Activated CD4-positive, alpha-beta memory T cell treated with anti-CD3 and anti-CD28 coated beads, Interleukin-2, amount 10 ng/mL, durations not matched to agents 7 days and 5 days (primary cell): ENCODE measurements at regions of chr10 and their contacts with region 1.

Region 1: DNA sequence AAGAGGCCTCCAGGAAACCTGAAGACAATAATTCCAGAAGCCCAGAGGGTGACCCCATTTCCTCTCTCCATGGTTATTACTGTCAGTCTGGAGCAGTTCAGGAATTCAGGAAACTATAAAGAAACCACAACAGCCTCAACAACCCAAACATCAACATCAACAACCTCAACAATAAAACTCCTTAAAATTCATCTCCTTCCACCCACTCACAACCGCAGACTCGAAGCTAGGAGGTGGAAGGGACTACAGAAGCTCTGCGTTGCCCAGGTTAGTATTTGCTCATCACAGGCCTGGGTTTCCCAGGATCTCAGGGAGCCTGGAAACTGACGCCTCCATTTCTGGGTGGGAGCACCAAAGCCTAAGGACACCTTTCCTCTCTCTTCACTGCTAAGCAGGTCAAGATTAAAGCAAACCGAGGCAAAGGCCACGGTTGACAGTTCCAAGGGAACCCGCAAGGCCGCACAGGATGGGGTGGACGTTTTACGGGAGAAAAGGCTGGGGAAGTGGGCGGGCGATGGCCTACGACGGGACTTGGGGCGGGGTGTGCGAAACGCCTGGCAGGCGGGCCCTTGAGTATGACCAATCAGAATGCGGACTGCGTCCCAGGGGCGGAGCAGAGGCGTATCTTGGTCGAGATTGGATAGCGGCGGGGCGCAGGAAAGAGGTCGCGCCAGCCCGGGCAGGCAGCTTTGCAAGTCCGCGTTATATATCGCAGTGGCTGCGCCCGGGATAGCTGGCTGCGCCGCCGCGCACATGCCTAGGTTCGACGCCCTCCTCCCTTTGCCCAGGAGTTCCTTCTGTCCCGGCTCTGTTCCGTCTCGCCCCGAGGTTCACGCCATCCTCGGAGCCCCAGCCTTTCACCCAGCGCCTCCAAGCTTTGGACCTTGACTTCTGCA is at the start of gene ELOVL3:
- DNase-seq: peak; percentile 90
- H3K4me3 Mint-ChIP-seq: peak within 1 kb of the TSS; percentile 63
- H3K27ac Mint-ChIP-seq: peak within 1 kb of the TSS; percentile 44
- H3K4me1 Mint-ChIP-seq: peaks cover 26% of the 10 kb centered on the region
- H3K27me3 Mint-ChIP-seq: peaks cover 67% of the 10 kb centered on the region
- total RNA-seq, gene ELOVL3: not detected

Region 2: DNA sequence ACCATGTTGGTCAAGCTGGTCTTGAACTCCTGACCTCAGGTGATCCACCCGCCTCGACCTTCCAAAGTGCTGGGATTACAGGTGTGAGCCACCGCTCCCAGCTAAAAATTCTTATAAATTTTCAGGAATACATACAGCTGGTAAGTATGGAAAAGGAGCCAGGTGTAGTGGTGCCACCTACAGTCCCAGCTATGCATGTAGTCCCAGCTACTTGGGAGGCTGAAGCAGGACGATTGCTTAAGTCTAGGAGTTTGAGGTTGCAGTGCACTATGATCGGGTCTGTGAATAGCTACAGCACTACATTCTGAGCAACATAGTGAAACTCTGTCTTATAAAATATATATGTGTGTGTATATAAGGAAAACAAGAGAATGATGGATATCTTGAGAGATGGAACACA is 124.7 kb before region 1 on chr10:
- CTCF ChIA-PET with region 1: no interaction called
- POLR2A ChIA-PET with region 1: no interaction called
- DNase-seq: no peak
- H3K4me3 Mint-ChIP-seq: no peak overlapping the region
- H3K27ac Mint-ChIP-seq: no peak overlapping the region
- H3K4me1 Mint-ChIP-seq: peaks cover 18% of the 10 kb centered on the region
- H3K27me3 Mint-ChIP-seq: no peaks in the 10 kb centered on the region

Region 3: DNA sequence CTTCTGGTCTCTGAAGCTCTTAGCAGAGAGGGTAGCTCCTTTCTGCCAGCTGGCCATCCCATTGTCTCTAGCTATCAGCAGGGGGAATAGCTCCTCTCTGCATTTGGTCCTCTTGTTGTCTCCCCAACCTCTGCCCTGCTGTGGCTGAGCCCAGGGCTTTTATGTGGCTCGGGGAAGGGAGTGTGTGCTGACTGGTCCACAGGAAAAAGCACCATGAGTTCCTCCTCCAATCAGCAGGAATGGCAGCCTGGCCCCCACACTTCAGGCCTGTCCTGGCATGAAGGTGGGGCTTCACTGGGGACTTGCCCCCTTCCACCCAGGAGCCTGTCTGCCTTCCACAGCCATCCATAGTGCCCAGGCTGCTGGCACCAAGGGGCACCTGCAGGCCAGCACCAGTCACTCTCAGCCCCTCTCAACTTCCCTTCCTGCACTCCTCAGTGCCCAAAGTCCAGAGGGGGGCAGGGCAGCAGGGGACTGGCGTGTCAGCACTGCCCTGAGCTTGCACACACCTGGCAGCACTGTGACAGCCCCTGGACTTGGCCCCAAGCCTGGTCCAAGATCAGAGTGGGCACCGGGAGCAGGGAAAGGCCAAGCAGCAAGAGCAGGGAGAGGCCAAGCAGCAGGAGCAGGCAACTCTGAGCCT is 37.5 kb before region 1 on chr10:
- CTCF ChIA-PET with region 1: interaction called, 26 read pairs
- POLR2A ChIA-PET with region 1: no interaction called
- DNase-seq: no peak
- H3K4me3 Mint-ChIP-seq: no peak overlapping the region
- H3K27ac Mint-ChIP-seq: peak overlapping the region; percentile 78
- H3K4me1 Mint-ChIP-seq: peaks cover 17% of the 10 kb centered on the region
- H3K27me3 Mint-ChIP-seq: peaks cover 5% of the 10 kb centered on the region

Region 4: DNA sequence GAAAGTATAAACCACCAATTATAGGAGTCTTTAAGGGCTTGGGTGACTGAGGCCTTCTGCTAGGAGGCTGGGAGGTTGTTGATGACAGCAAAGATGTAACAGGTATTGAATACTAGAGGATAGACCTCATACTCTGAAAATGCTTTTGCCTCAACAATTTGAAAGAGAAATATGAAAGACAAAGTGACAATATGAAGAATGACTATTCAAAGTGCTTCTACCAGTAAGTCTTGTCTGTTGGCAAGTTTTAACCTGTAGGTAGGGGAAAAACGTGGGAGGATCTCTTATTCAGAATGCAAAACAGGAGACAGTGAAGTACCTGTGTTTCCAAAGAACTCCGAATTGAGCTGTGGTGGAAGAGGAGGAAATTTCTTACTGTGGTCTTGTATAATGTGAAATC is 57.6 kb after region 1 on chr10:
- CTCF ChIA-PET with region 1: interaction called, 14 read pairs
- POLR2A ChIA-PET with region 1: no interaction called
- DNase-seq: no peak
- H3K4me3 Mint-ChIP-seq: peak overlapping the region; percentile 25
- H3K27ac Mint-ChIP-seq: peak overlapping the region; percentile 80
- H3K4me1 Mint-ChIP-seq: peaks cover 77% of the 10 kb centered on the region
- H3K27me3 Mint-ChIP-seq: no peaks in the 10 kb centered on the region

Region 5: GRCh38 chr10:102342958-102343357 is 117.1 kb after region 1 on chr10:
- CTCF ChIA-PET with region 1: interaction called, 593 read pairs
- POLR2A ChIA-PET with region 1: interaction called, 4 read pairs
- DNase-seq: no peak
- H3K4me3 Mint-ChIP-seq: no peak overlapping the region
- H3K27ac Mint-ChIP-seq: no peak overlapping the region
- H3K4me1 Mint-ChIP-seq: peaks cover 6% of the 10 kb centered on the region
- H3K27me3 Mint-ChIP-seq: no peaks in the 10 kb centered on the region

Region 6: GRCh38 chr10:102368072-102368471 is 142.2 kb after region 1 on chr10:
- CTCF ChIA-PET with region 1: interaction called, 12 read pairs
- POLR2A ChIA-PET with region 1: interaction called, 3 read pairs
- DNase-seq: no peak
- H3K4me3 Mint-ChIP-seq: no peak overlapping the region
- H3K27ac Mint-ChIP-seq: no peak overlapping the region
- H3K4me1 Mint-ChIP-seq: no peaks in the 10 kb centered on the region
- H3K27me3 Mint-ChIP-seq: no peaks in the 10 kb centered on the region

Region 7: GRCh38 chr10:102394079-102394800 is 168.3 kb after region 1 on chr10:
- CTCF ChIA-PET with region 1: interaction called, 199 read pairs
- POLR2A ChIA-PET with region 1: interaction called, 38 read pairs
- DNase-seq: peak; percentile 98
- H3K4me3 Mint-ChIP-seq: peak overlapping the region; percentile 84
- H3K27ac Mint-ChIP-seq: peak overlapping the region; percentile 93
- H3K4me1 Mint-ChIP-seq: peaks cover 41% of the 10 kb centered on the region
- H3K27me3 Mint-ChIP-seq: no peaks in the 10 kb centered on the region

Region 8: GRCh38 chr10:102583435-102584417 is 357.8 kb after region 1 on chr10:
- CTCF ChIA-PET with region 1: interaction called, 39 read pairs
- POLR2A ChIA-PET with region 1: interaction called, 4 read pairs
- DNase-seq: peak; percentile 85
- H3K4me3 Mint-ChIP-seq: no peak overlapping the region
- H3K27ac Mint-ChIP-seq: no peak overlapping the region
- H3K4me1 Mint-ChIP-seq: peaks cover 18% of the 10 kb centered on the region
- H3K27me3 Mint-ChIP-seq: no peaks in the 10 kb centered on the region